PC-3 (cell line): ENCODE measurements at regions of chr15 and their contacts with region 1.

Region 1: GRCh38 chr15:90320061-90320884 is 31.8 kb upstream of the ZNF774 start:
- DNase-seq: peak; percentile 96
- ATAC-seq: peak; percentile 93
- H3K4me3 ChIP-seq: peak overlapping the region; percentile 28; the same call in 1 of the 2 replicates
- H3K27ac ChIP-seq: no peak overlapping the region
- H3K4me1 ChIP-seq: peaks cover 17% of the 10 kb centered on the region
- H3K27me3 ChIP-seq: no peaks in the 10 kb centered on the region
- CTCF ChIP-seq: peak; percentile 97

Region 2: GRCh38 chr15:90362936-90363212 is 42.6 kb after region 1 on chr15:
- CTCF ChIA-PET with region 1: interaction called, 4 read pairs
- POLR2A ChIA-PET with region 1: no interaction called
- intact Hi-C with region 1: loop called (anchors 1 kb)
- DNase-seq: peak; percentile 61
- ATAC-seq: peak; percentile 48
- H3K4me3 ChIP-seq: no peak overlapping the region
- H3K27ac ChIP-seq: peak overlapping the region; percentile 74
- H3K4me1 ChIP-seq: peaks cover 40% of the 10 kb centered on the region
- H3K27me3 ChIP-seq: no peaks in the 10 kb centered on the region
- CTCF ChIP-seq: no peak

Region 3: DNA sequence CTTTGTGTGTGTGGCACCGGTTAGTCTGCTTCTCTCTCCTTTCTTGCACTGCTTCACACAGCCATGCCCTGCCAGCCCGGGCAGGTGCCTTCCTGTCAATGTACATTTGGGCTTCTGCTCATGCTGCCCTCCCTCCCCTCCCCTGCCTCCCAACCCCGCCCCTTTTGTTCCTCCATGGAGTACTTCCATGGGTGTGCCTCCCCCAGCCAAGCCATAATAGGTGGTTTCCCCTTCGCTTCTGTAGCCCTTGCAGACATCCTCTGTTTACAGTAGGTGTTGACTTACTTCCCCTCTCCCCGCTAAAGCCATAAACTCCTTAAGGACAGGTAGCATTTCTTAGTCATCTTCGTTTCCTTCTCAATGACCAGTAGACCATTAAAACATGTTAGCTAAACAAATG is 177.6 kb after region 1 on chr15:
- CTCF ChIA-PET with region 1: interaction called, 3 read pairs
- POLR2A ChIA-PET with region 1: no interaction called
- intact Hi-C with region 1: loop called (anchors 1 kb)
- DNase-seq: peak; percentile 94
- ATAC-seq: peak; percentile 100
- H3K4me3 ChIP-seq: no peak overlapping the region
- H3K27ac ChIP-seq: 0 out of 2 replicates have a peak overlapping the region, but pooled peaks have one; percentile 3
- H3K4me1 ChIP-seq: peaks cover 12% of the 10 kb centered on the region
- H3K27me3 ChIP-seq: no peaks in the 10 kb centered on the region
- CTCF ChIP-seq: no peak

Region 4: GRCh38 chr15:90638201-90638691 is 318.0 kb after region 1 on chr15:
- CTCF ChIA-PET with region 1: no interaction called
- POLR2A ChIA-PET with region 1: no interaction called
- intact Hi-C with region 1: no loop called
- DNase-seq: no peak
- ATAC-seq: no peak
- H3K4me3 ChIP-seq: no peak overlapping the region
- H3K27ac ChIP-seq: no peak overlapping the region
- H3K4me1 ChIP-seq: no peaks in the 10 kb centered on the region
- H3K27me3 ChIP-seq: no peaks in the 10 kb centered on the region
- CTCF ChIP-seq: no peak